ENCODE measurements at regions of chr2 and their contacts with region 1.

Region 1: DNA sequence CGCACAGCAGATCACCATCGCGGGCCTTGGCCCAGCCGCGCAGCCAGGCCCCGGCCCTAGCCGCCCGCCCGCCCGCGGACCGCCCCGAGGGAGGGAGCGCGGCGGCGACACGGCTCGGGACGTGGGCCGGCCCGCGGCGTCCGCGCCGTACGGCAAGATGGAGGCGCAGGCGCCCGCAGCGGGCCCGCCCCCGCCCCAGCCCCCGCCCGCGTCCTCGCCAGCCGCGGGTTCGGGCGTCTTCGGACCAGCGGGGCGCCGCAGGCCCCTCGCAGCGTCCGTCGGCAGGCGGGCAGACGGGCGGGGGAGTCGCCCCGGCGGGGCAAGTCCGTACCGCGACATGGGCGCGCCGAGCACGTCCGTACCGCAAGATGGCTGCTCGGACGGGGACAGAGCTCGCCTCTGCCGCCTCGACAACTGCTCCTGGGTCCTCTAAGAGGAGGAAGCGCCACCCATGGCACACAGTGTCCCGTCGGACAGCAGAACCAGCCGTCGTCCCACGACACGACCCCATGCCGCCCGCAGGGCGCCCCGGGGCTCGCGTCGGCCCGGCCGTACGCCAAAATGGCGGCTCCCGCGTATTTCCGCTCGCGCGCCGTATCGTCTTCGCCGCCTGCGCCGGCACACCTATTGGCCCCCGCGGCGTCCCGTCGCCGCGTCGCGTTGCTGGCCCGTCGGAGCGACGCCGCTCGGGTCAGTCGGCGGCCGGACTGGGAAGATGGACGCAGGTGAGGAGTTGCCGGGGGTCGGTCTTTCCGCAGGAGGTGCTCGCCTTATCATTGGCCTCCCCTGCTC is at the starts of genes ATG4B and THAP4:
- DNase-seq: peak; percentile 55 to 93 (median 70)
- ATAC-seq: peak; percentile 67 to 73
- H3K4me3 Mint-ChIP-seq: peak within 1 kb of the TSS; percentile 80 to 98 (median 91)
- H3K27ac Mint-ChIP-seq: peak within 1 kb of the TSS; percentile 85 to 97 (median 94)
- H3K4me1 Mint-ChIP-seq: peaks cover 31 to 61% (median 57%) of the 10 kb centered on the region in 4 donors
- H3K27me3 Mint-ChIP-seq: no peaks in the 10 kb centered on the region
- polyA plus RNA-seq, gene ATG4B: 45.8 to 60.1 (median 46.5) TPM
- polyA plus RNA-seq, gene THAP4: 29.6 to 58.4 (median 38.9) TPM

Region 2: GRCh38 chr2:241609859-241610793 is 27.1 kb before region 1 on chr2:
- POLR2A ChIA-PET with region 1: interaction called, 14 read pairs
- DNase-seq: peak; percentile 87 to 94 (median 93)
- ATAC-seq: peak; percentile 98 to 99
- H3K4me3 Mint-ChIP-seq: peak overlapping the region; percentile 24 to 83 (median 73)
- H3K27ac Mint-ChIP-seq: peak overlapping the region; percentile 50 to 95 (median 82)
- H3K4me1 Mint-ChIP-seq: peaks cover 14 to 28% (median 22%) of the 10 kb centered on the region in 4 donors
- H3K27me3 Mint-ChIP-seq: no peaks in the 10 kb centered on the region

Region 3: GRCh38 chr2:241686649-241687425 is 49.6 kb after region 1 on chr2 and contains the start of gene DTYMK:
- POLR2A ChIA-PET with region 1: interaction called, 19 read pairs
- DNase-seq: peak; percentile 91 to 98 (median 95)
- ATAC-seq: peak; percentile 93 to 96
- H3K4me3 Mint-ChIP-seq: peak within 1 kb of the TSS; percentile 85 to 96 (median 90)
- H3K27ac Mint-ChIP-seq: peak within 1 kb of the TSS; percentile 75 to 97 (median 88)
- H3K4me1 Mint-ChIP-seq: peaks cover 10 to 34% (median 29%) of the 10 kb centered on the region in 4 donors
- H3K27me3 Mint-ChIP-seq: no peaks in the 10 kb centered on the region
- polyA plus RNA-seq, gene DTYMK: 36.3 to 40.7 (median 38.6) TPM

Measured in naive thymus-derived CD8-positive, alpha-beta T cell (primary cell).